ENCODE measurements at regions of chrX and their contacts with region 1.

Region 1: DNA sequence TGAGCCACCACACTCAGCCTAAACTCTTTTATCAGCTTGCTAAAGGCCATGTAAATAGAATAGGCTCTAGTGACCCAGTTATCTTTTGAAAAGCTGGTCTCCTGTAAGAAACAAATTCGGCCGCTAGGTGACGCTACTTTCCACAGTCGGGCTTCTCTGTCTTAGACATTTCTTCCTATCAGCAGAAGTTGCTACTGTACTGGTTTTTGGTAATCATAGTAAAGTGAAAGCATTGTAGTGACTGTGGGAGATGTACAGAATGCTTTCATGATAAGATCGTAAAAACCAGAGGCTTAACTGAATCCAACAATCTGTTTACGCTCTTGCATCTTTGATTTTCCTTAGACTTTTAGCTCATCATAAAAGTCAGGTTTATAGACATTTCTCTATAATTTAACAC is 82.6 kb downstream of the GK start:
- DNase-seq: peak; percentile 63 to 73
- H3K4me3 ChIP-seq: no peak overlapping the region
- H3K4me3 Mint-ChIP-seq: no peak overlapping the region
- H3K27ac Mint-ChIP-seq: no peak overlapping the region
- H3K4me1 ChIP-seq: no peaks in the 10 kb centered on the region
- H3K4me1 Mint-ChIP-seq: no peaks in the 10 kb centered on the region
- H3K27me3 ChIP-seq: no peaks in the 10 kb centered on the region
- H3K27me3 Mint-ChIP-seq: no peaks in the 10 kb centered on the region
- CTCF ChIP-seq: peak; percentile 60 to 71

Region 2: GRCh38 chrX:30627818-30628652 is 107.8 kb before region 1 on chrX:
- CTCF ChIA-PET with region 1: no interaction called
- POLR2A ChIA-PET with region 1: no interaction called
- intact Hi-C with region 1: no loop called
- DNase-seq: peak; percentile 13 to 35
- H3K4me3 ChIP-seq: no peak overlapping the region
- H3K4me3 Mint-ChIP-seq: no peak overlapping the region
- H3K27ac Mint-ChIP-seq: peak overlapping the region; percentile 77
- H3K4me1 ChIP-seq: peaks cover 15% of the 10 kb centered on the region
- H3K4me1 Mint-ChIP-seq: no peaks in the 10 kb centered on the region
- H3K27me3 ChIP-seq: no peaks in the 10 kb centered on the region
- H3K27me3 Mint-ChIP-seq: no peaks in the 10 kb centered on the region
- CTCF ChIP-seq: no peak

Region 3: DNA sequence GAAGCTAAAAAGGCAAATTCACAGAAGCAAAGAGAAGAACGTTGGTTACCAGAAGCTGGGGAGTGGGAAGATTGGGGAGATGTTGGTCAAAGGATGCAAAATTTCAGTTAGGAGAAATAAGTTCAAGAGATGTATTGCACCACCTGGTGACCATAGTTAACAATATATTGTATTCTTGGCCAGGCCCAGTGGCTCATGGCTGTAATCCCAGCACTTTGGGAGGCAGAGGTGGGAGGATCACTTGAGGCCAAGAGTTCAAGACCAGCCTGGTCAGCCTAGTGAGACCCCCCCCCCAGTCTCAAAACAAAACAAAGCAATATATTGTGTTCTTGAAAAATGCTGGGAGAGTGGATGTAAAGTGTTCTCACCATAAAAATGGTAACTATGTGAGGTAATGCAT is 85.3 kb after region 1 on chrX:
- CTCF ChIA-PET with region 1: interaction called, 4 read pairs
- POLR2A ChIA-PET with region 1: no interaction called
- intact Hi-C with region 1: loop called (anchors 1 kb)
- DNase-seq: peak in 1 of 2 experiments; percentile 10
- H3K4me3 ChIP-seq: no peak overlapping the region
- H3K4me3 Mint-ChIP-seq: no peak overlapping the region
- H3K27ac Mint-ChIP-seq: no peak overlapping the region
- H3K4me1 ChIP-seq: no peaks in the 10 kb centered on the region
- H3K4me1 Mint-ChIP-seq: peaks cover 6% of the 10 kb centered on the region
- H3K27me3 ChIP-seq: no peaks in the 10 kb centered on the region
- H3K27me3 Mint-ChIP-seq: no peaks in the 10 kb centered on the region
- CTCF ChIP-seq: no peak

Region 4: DNA sequence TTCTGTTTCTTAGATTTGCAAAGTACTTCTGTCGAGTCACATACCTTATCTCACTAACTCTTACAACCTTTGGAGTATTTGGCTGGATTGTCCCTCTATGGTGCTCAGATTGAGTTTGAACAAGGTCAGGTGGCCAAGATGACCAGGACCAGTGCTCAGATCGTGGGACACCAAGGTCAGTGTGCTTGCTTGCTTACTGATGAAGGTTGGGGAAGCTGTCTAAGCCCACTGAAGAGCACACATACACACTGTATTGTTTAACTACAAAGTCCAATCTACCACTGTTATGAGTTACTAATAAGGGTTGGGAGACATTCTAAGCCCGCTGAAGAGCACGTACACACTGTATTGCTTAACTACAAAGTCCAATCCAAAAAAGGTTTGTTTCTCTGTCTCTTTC is 99.5 kb after region 1 on chrX:
- CTCF ChIA-PET with region 1: no interaction called
- POLR2A ChIA-PET with region 1: no interaction called
- intact Hi-C with region 1: loop called (anchors 5 kb)
- DNase-seq: peak; percentile 30 to 65
- H3K4me3 ChIP-seq: no peak overlapping the region
- H3K4me3 Mint-ChIP-seq: no peak overlapping the region
- H3K27ac Mint-ChIP-seq: no peak overlapping the region
- H3K4me1 ChIP-seq: peaks cover 16% of the 10 kb centered on the region
- H3K4me1 Mint-ChIP-seq: peaks cover 7% of the 10 kb centered on the region
- H3K27me3 ChIP-seq: no peaks in the 10 kb centered on the region
- H3K27me3 Mint-ChIP-seq: no peaks in the 10 kb centered on the region
- CTCF ChIP-seq: no peak

Region 5: DNA sequence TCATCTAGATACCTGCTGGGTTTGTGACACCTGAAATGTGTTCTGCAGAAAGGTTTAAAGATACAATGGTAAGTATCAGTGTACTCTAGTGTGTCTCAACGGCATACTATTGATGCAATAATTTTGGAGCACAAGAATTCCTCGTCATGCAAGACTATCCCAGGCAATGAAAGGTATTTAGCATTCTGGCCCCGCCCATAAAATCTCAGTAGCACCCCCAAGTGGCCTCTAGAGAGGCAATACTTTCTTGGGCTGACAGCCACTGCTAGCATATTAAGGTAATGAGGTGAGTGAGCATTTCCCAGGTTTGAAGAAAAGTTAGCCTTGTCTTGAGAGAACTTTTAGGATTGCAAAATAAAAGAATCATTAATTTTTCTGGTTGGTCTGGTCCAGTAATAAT is 129.2 kb after region 1 on chrX:
- CTCF ChIA-PET with region 1: interaction called, 6 read pairs
- POLR2A ChIA-PET with region 1: no interaction called
- intact Hi-C with region 1: loop called (anchors 5 kb)
- DNase-seq: peak; percentile 43 to 55
- H3K4me3 ChIP-seq: no peak overlapping the region
- H3K4me3 Mint-ChIP-seq: no peak overlapping the region
- H3K27ac Mint-ChIP-seq: no peak overlapping the region
- H3K4me1 ChIP-seq: peaks cover 21% of the 10 kb centered on the region
- H3K4me1 Mint-ChIP-seq: no peaks in the 10 kb centered on the region
- H3K27me3 ChIP-seq: no peaks in the 10 kb centered on the region
- H3K27me3 Mint-ChIP-seq: no peaks in the 10 kb centered on the region
- CTCF ChIP-seq: peak in 1 of 2 experiments; percentile 26